ENCODE measurements at regions of chr3 and their contacts with region 1.

Region 1: DNA sequence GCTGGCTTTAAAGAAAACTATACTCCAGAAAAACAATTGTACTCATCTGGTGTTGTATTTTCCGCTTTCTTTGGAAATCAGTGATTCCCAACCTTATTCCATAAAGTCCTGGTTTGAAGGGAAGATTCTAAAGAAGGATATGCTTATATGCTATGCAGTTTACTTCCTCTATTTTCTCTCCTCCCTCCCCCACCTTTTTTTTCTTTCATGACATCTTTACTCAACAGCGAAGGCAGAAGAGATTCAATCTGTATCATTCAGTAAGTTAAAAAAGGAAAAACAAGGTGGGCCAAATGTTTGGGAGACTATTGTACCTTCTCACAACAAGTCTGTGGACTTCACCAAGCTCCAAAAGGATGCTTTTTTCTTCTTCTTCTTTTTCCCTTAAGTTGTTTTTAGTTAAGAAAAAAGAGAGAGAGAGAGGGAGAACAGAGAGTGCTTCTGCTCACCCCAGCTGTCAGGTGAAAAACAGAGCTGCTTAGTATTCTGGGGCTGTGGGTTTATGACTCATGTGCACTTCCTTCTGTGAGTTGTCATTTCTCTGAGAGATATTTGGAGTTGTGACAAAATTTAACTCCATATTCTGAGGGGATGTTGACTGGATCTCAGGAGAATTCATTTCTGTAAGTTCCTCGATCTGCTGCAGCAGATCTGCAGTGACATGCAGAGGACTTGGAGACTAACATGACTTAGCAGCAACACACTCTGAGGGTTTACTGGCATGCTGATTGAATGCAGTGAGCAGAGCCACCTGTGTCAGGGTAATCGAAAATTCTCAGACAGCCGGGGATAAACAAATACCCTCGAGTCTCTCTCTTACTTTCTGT is 70.7 kb downstream of the SSR3 start:
- DNase-seq: peak; percentile 63
- ATAC-seq: peak; percentile 76
- H3K4me3 Mint-ChIP-seq: peak overlapping the region; percentile 69
- H3K27ac Mint-ChIP-seq: peak overlapping the region; percentile 92
- H3K4me1 Mint-ChIP-seq: peaks cover 35% of the 10 kb centered on the region
- H3K27me3 Mint-ChIP-seq: no peaks in the 10 kb centered on the region

Region 2: DNA sequence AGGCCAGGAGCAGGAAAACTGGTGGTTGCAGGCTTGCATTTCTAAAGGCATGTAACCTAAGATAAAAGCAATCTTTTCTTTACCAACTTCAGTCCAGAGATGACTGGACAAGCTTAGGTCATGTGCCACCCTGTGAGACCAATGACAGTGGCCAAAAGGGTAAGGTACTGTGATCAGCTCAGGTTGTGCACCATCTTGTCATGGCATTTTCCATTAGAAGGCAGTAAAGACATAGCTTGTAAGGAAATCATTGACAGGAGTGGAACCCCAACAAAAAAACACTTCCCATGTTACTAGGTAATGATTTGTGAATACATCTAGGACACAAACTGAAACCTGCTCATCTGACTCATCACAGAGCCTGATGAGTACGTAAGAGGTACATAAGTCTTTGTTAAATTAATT is 35.6 kb after region 1 on chr3:
- CTCF ChIA-PET with region 1: interaction called, 4 read pairs
- POLR2A ChIA-PET with region 1: interaction called, 3 read pairs
- intact Hi-C with region 1: loop called (anchors 1 to 5 kb)
- DNase-seq: peak; percentile 26
- ATAC-seq: peak; percentile 82
- H3K4me3 Mint-ChIP-seq: no peak overlapping the region
- H3K27ac Mint-ChIP-seq: peak overlapping the region; percentile 3
- H3K4me1 Mint-ChIP-seq: peaks cover 21% of the 10 kb centered on the region
- H3K27me3 Mint-ChIP-seq: peaks cover 26% of the 10 kb centered on the region

Region 3: DNA sequence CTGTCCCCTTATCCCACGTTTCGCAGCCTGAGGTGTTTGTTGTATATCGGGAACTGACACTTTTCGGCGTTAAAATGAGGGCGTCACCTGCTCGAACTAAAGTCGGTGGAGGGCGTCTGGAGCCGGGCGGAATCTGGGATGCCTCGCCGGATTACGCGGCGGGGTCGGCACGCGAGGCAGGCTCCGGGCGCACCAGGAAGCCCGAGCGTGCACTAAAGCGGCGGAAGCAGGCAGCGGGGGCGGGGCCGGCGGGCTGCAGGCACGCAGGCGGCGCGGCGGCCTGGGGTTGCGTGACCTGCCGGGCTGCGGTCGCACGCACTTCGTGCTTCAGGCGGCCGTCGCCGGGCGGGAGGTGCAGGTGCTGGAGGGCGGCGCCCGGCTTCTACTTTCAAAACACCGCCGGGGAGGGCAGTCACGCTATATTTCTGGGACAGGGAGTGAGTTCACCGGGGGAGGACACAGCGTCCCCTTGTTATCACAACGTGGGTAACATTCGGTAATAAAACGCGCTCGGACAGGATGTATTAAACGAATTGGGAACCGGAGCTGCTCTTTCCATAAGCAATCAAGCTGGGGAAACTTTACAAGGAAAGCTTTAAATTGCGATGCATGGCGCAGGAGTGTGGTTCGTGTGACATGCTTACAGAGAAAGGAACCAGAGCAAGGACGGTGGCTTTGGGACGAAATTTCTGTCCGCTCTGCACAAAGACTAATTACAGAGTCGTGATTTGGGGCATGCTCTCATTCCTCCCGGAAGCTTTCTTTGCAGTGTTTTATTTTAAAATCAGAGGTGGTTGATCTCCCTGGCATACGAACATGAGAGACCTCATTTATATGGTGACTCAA is 332.8 kb after region 1 on chr3:
- CTCF ChIA-PET with region 1: interaction called, 3 read pairs
- POLR2A ChIA-PET with region 1: no interaction called
- intact Hi-C with region 1: loop called in 1 of 2 experiments (anchors 2 kb)
- DNase-seq: peak; percentile 92
- ATAC-seq: peak; percentile 83
- H3K4me3 Mint-ChIP-seq: peak overlapping the region; percentile 79
- H3K27ac Mint-ChIP-seq: peak overlapping the region; percentile 92
- H3K4me1 Mint-ChIP-seq: peaks cover 36% of the 10 kb centered on the region
- H3K27me3 Mint-ChIP-seq: no peaks in the 10 kb centered on the region

Region 4: GRCh38 chr3:156826144-156826895 is 342.1 kb after region 1 on chr3 and contains the start of gene LEKR1:
- CTCF ChIA-PET with region 1: no interaction called
- POLR2A ChIA-PET with region 1: no interaction called
- intact Hi-C with region 1: loop called in 1 of 2 experiments (anchors 2 kb)
- DNase-seq: peak; percentile 76
- ATAC-seq: peak; percentile 77
- H3K4me3 Mint-ChIP-seq: peak within 1 kb of the TSS; percentile 82
- H3K27ac Mint-ChIP-seq: peak within 1 kb of the TSS; percentile 95
- H3K4me1 Mint-ChIP-seq: peaks cover 17% of the 10 kb centered on the region
- H3K27me3 Mint-ChIP-seq: no peaks in the 10 kb centered on the region
- total RNA-seq, gene LEKR1: 0.37 to 0.53 TPM

Region 5: DNA sequence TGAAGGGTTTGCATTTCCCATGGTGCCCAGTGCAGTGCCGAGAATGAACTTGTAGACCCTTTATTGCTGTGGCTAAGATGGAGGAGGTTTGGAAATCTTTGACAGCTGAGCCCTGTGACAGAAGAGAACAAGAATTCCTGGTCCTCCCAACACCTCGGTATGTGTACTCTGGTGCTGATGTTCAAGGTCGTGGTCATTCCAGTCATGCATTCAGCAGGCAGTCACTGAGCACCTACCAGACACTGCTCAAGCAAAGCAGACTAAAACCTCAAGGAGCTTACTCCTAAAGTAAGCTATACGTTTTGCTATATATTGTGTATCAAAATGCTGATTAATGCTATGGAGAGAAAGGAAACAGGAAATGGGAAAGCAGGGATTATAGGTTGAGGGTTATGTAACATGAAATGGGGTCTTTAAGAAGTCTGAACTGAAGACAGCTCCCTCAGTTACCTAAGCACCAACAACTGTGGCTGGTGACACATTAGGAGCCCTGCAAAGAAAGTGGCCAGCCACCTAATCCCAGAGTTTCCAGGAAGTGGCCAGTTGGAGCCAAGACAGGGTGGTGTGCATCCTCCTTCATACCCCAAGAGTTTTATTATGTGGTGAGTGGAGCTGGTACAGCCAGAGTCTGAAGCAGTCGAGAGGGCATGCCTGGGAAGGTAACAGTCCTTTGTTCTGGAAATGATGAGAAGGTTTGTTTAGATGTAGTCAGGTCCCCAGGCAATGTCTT is 610.7 kb after region 1 on chr3:
- CTCF ChIA-PET with region 1: no interaction called
- POLR2A ChIA-PET with region 1: no interaction called
- intact Hi-C with region 1: no loop called
- DNase-seq: no peak
- ATAC-seq: no peak
- H3K4me3 Mint-ChIP-seq: no peak overlapping the region
- H3K27ac Mint-ChIP-seq: no peak overlapping the region
- H3K4me1 Mint-ChIP-seq: peaks cover 57% of the 10 kb centered on the region
- H3K27me3 Mint-ChIP-seq: no peaks in the 10 kb centered on the region